ENCODE measurements at regions of chr11 and their contacts with region 1.

Region 1: DNA sequence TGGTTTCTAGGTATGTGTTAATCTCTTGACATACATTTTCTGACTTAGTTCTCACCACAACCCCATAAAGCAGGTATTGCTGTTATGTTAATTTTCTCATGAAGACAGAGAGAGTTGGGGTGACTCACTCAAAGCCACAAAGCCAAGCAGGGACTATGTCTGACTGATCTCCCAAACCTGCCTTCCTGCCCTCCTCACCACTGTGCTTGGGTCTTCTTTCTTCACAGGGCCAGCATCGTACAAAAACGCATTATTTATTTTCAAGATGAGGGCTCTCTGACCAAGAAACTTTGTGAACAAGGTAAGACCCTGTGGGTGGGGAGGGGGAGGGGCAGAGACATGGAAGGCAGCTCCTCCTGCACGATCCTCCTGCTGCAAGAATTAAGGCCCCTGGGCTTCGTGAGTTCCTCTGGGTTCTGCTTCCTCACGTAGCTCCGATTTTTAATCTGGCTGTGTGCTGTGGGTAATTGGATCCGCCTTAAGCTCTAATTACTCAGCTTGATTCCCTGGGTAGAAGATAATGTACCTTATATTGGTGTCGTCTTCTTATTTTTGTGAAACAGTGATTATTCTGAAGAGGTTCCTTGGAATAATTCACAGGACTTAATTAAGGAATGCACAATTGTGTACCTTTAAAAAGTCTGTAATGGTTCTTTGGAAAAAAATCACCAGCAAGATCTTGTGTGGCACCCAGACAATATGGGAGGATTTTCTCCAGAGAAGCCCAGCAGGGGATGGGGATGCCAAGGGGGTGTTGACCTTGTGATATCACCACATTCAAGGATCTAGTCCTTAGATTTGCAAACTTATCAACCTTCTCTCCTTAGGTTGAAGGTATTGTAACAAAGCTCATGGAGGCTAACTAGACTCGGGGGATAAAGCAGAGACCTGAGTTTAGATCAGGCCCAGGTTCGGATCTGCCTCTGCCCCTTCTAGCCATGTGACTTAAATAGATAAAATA is 112.9 kb downstream of the SPON1 start:
- DNase-seq: peak; percentile 3 to 73 (median 61)
- H3K4me3 ChIP-seq: peak overlapping the region; percentile 38
- H3K4me3 Mint-ChIP-seq: peak overlapping the region; percentile 69 to 85 (median 82)
- H3K27ac ChIP-seq: no peak overlapping the region
- H3K27ac Mint-ChIP-seq: peak overlapping the region; percentile 82 to 94 (median 90)
- H3K4me1 ChIP-seq: peaks cover 63% of the 10 kb centered on the region
- H3K4me1 Mint-ChIP-seq: peaks cover 42 to 65% (median 44%) of the 10 kb centered on the region in 3 donors
- H3K27me3 ChIP-seq: no peaks in the 10 kb centered on the region
- H3K27me3 Mint-ChIP-seq: peaks cover 1 to 7% of the 10 kb centered on the region in 2 donors

Region 2: GRCh38 chr11:14089690-14090462 is 14.5 kb after region 1 on chr11:
- CTCF ChIA-PET with region 1: interaction called, 3 read pairs
- POLR2A ChIA-PET with region 1: interaction called, 14 read pairs
- DNase-seq: no peak
- H3K4me3 ChIP-seq: no peak overlapping the region
- H3K4me3 Mint-ChIP-seq: peak overlapping the region in 2 of 7 donors; percentile 38 to 61
- H3K27ac ChIP-seq: no peak overlapping the region
- H3K27ac Mint-ChIP-seq: peak overlapping the region in 1 of 8 donors; percentile 3
- H3K4me1 ChIP-seq: peaks cover 10% of the 10 kb centered on the region
- H3K4me1 Mint-ChIP-seq: peaks cover 15 to 34% (median 23%) of the 10 kb centered on the region in 3 donors
- H3K27me3 ChIP-seq: no peaks in the 10 kb centered on the region
- H3K27me3 Mint-ChIP-seq: peaks cover 15 to 24% of the 10 kb centered on the region in 2 donors

Measured in CD8-positive, alpha-beta memory T cell (primary cell).